Body of pancreas (tissue), 4 donors: ENCODE measurements at regions of chr2 and their contacts with region 1.

Region 1: GRCh38 chr2:102240640-102241370 is 54.0 kb downstream of the IL1RL2 start:
- DNase-seq: peak; percentile 90 to 92 (median 92)
- ATAC-seq: peak; percentile 92
- H3K4me3 ChIP-seq: no peak overlapping the region
- H3K27ac ChIP-seq: peak overlapping the region; percentile 20 to 82 (median 64)
- H3K4me1 ChIP-seq: peaks cover 18% of the 10 kb centered on the region
- H3K27me3 ChIP-seq: no peaks in the 10 kb centered on the region
- CTCF ChIP-seq: peak; percentile 94 to 99 (median 97)
- POLR2A ChIP-seq: no peak

Region 2: DNA sequence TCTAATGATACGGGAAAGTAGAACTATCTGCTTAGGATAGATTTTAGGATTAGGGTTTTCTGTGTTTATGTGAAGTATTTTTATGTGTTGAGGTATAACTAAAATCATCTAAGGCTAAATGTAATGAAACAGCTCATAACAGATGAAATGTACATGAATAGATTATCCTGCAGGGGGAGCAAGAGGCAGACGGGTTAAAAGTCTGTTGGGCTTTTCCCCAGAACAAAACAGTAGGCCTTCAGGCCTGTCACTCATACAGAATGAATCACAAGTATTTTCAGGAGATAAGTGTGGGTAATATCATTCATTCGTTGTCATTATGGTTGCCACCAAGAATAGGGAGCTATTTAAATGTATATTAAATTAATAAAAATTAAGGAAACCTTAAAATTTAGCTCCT is 356.9 kb before region 1 on chr2:
- intact Hi-C with region 1: loop called (anchors 10 kb)
- DNase-seq: peak; percentile 14 to 50 (median 28)
- ATAC-seq: peak; percentile 77
- H3K4me3 ChIP-seq: no peak overlapping the region
- H3K27ac ChIP-seq: no peak overlapping the region
- H3K4me1 ChIP-seq: no peaks in the 10 kb centered on the region
- H3K27me3 ChIP-seq: no peaks in the 10 kb centered on the region
- CTCF ChIP-seq: peak; percentile 32 to 76 (median 67)
- POLR2A ChIP-seq: no peak